Adrenal gland (tissue), 19 donors: ENCODE measurements at regions of chr9 and their contacts with region 1.

Region 1: DNA sequence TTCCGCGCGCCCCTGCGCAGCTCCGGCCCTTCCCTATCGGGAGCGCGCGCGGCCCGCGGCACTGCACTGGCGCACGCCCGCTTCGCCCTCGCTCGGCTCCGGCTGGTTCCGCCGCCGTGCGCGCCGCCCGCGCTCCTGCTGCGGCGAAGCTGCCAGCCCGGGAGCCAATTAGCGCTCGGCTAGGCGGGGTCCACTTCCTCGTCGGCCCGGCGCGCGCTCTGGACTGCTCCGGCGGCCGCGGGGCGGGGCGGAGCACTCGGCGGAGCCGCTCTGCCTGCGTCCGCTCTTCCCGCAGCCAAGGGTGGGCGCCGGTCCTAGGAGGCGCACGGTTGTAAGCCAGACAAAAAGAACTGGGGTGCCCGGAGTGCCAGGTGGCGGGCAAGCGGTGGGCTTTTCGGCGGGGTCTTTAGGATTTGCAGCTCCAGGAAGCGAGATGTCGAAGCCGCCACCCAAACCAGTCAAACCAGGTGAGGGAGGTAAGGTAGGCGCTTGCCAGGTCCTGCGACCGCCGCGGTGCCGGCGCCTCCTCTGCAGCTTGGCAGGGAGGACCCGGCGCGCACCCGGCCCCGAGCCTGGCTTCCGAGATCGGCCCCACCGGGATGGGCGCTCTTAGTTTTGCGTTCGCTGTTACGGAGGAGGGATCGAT is at the start of gene OSTF1:
- DNase-seq: peak; percentile 95 to 97 (median 96)
- H3K4me3 ChIP-seq: peak within 1 kb of the TSS; percentile 82 to 91 (median 86)
- H3K27ac ChIP-seq: peak within 1 kb of the TSS; percentile 89 to 98 (median 96)
- H3K4me1 ChIP-seq: peaks cover 0 to 66% of the 10 kb centered on the region in 2 donors
- H3K27me3 ChIP-seq: no peaks in the 10 kb centered on the region
- CTCF ChIP-seq: no peak
- POLR2A ChIP-seq: peak; percentile 96 to 97
- total RNA-seq, gene OSTF1: 23.5 to 52.2 (median 35.1) TPM

Region 2: DNA sequence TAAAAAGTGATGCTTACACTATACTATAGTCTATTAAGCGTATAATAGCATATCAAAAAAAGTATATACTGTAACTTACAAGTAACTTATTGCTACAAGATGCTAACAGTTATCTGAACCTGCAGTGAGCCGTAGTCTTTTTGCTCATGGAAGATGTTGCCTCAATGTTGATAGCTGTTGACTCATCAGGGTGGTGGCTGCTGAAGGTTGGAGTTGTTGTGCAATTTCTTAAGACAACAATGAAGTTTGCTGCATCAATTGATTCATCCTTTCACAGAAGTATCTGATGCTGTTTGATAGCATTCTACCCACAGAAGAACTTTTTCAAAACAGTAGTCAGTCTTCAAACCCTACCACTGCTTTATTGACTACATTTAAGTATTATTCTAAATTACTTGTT is 127.8 kb before region 1 on chr9:
- intact Hi-C with region 1: no loop called
- DNase-seq: no peak
- H3K4me3 ChIP-seq: no peak overlapping the region
- H3K27ac ChIP-seq: no peak overlapping the region
- H3K4me1 ChIP-seq: no peaks in the 10 kb centered on the region
- H3K27me3 ChIP-seq: no peaks in the 10 kb centered on the region
- CTCF ChIP-seq: no peak
- POLR2A ChIP-seq: no peak

Region 3: DNA sequence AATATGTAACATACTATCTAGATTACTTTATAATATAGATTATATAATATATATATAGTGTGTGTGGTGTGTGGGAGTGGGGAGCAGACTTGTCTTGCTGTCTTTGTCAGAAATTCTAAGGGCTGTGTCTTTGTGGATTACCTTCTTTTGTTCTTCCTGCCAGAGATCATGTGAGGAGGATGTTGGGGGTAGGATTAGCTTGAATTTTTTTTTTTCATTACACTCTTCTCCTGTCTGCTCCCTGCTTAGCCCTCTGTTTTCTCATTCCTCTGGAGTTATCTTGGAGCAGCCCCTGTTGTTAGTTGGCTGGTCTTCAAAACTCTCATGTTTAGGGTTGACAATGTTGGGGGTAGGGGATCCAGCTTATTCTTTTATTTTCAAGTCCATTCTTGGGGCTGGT is 114.7 kb before region 1 on chr9:
- intact Hi-C with region 1: no loop called
- DNase-seq: no peak
- H3K4me3 ChIP-seq: no peak overlapping the region
- H3K27ac ChIP-seq: no peak overlapping the region
- H3K4me1 ChIP-seq: no peaks in the 10 kb centered on the region
- H3K27me3 ChIP-seq: no peaks in the 10 kb centered on the region
- CTCF ChIP-seq: no peak
- POLR2A ChIP-seq: no peak

Region 4: GRCh38 chr9:75027187-75028107 is 60.9 kb before region 1 on chr9:
- intact Hi-C with region 1: loop called in 1 of 2 experiments (anchors 10 kb)
- DNase-seq: peak; percentile 74 to 87 (median 79)
- H3K4me3 ChIP-seq: peak overlapping the region; percentile 64 to 81 (median 67)
- H3K27ac ChIP-seq: peak overlapping the region; percentile 88 to 99 (median 98)
- H3K4me1 ChIP-seq: peaks cover 7 to 37% of the 10 kb centered on the region in 2 donors
- H3K27me3 ChIP-seq: no peaks in the 10 kb centered on the region
- CTCF ChIP-seq: no peak
- POLR2A ChIP-seq: no peak